Prostate gland (tissue), 2 donors: ENCODE measurements at regions of chr1 and their contacts with region 1.

Region 1: GRCh38 chr1:9494929-9495758 is 44.1 kb upstream of the SLC25A33 start:
- DNase-seq: no peak
- H3K4me3 ChIP-seq: no peak overlapping the region
- H3K27ac ChIP-seq: no peak overlapping the region
- H3K4me1 ChIP-seq: no peaks in the 10 kb centered on the region
- H3K27me3 ChIP-seq: no peaks in the 10 kb centered on the region
- CTCF ChIP-seq: peak; percentile 95 to 99 (median 96)
- POLR2A ChIP-seq: no peak

Region 2: DNA sequence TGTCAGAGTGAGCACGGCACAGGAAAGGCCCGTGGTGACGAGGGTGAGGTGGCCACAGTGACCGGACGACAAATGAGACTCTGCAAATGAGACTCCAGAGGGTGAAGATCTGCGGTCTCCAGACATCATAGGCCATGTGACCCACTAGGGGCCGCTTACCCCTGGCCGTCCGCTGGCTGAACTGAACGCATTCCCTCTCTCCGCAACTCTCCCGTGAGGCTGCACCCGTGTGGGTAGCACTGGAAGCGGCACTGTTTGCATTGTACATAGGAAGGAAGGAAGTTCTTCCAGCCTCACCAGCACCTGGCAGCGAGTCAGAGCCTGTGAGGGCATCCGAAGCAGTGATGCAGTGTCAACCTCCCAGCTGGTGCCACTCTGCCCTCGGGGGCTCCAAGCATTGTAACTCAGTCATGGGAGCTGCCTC is 226.1 kb before region 1 on chr1:
- intact Hi-C with region 1: loop called (anchors 5 kb)
- DNase-seq: no peak
- H3K4me3 ChIP-seq: no peak overlapping the region
- H3K27ac ChIP-seq: no peak overlapping the region
- H3K4me1 ChIP-seq: no peaks in the 10 kb centered on the region
- H3K27me3 ChIP-seq: no peaks in the 10 kb centered on the region
- CTCF ChIP-seq: no peak
- POLR2A ChIP-seq: no peak

Region 3: GRCh38 chr1:9539165-9539828 is 44.2 kb after region 1 on chr1 and contains the start of gene SLC25A33:
- intact Hi-C with region 1: no loop called
- DNase-seq: peak; percentile 97
- H3K4me3 ChIP-seq: peak within 1 kb of the TSS; percentile 81 to 88
- H3K27ac ChIP-seq: peak within 1 kb of the TSS; percentile 92 to 97
- H3K4me1 ChIP-seq: peaks cover 12% of the 10 kb centered on the region
- H3K27me3 ChIP-seq: no peaks in the 10 kb centered on the region
- CTCF ChIP-seq: no peak
- POLR2A ChIP-seq: peak; percentile 72
- total RNA-seq, gene SLC25A33: 10.7 to 11.9 TPM

Region 4: GRCh38 chr1:9573723-9574122 is 78.6 kb after region 1 on chr1:
- intact Hi-C with region 1: loop called (anchors 5 kb)
- DNase-seq: no peak
- H3K4me3 ChIP-seq: no peak overlapping the region
- H3K27ac ChIP-seq: no peak overlapping the region
- H3K4me1 ChIP-seq: no peaks in the 10 kb centered on the region
- H3K27me3 ChIP-seq: no peaks in the 10 kb centered on the region
- CTCF ChIP-seq: peak in 3 of 4 experiments; percentile 14 to 44 (median 37)
- POLR2A ChIP-seq: no peak

Region 5: DNA sequence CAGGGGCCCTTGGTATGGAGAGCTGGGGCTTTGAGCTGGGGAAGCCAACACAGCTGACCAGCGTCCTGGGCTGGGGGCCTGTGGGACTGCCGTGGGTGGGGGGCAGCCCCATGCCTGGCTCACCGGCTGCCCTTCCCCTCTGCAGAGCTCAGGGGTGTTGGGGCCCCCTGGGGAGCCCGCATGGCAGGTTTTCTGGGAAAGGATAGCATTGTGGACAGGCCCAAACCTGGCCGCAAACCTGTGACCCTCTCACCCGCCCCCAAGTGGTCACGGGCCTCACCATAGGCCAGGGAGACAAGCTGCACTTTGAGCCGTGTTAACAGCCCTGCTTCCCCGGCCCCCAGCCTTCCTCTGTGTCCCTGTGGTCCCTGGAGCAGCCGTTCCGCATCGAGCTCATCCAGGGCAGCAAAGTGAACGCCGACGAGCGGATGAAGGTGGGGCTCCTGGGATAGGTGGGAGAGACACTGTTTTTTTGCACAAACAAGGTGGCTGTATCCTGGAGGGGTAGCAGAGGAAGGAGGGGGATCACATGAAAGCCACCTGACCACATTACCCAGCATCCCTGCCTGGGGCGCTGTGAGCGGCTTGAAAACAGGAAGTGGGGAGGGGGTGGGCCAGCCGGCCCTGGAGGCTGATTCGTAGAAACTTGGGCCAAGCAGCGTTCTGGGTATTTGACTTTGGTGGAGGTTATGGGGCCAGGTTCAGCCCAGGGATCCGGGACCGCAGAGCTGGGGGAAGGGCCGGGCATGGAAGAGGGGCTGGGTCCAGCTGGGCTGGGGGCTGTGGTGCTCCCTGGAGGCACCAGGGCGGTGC is 222.3 kb after region 1 on chr1:
- intact Hi-C with region 1: no loop called
- DNase-seq: peak; percentile 49
- H3K4me3 ChIP-seq: peak overlapping the region in 1 of 2 donors; percentile 1
- H3K27ac ChIP-seq: no peak overlapping the region
- H3K4me1 ChIP-seq: no peaks in the 10 kb centered on the region
- H3K27me3 ChIP-seq: no peaks in the 10 kb centered on the region
- CTCF ChIP-seq: no peak
- POLR2A ChIP-seq: no peak